ENCODE measurements at regions of chr20 and their contacts with region 1.

Region 1: DNA sequence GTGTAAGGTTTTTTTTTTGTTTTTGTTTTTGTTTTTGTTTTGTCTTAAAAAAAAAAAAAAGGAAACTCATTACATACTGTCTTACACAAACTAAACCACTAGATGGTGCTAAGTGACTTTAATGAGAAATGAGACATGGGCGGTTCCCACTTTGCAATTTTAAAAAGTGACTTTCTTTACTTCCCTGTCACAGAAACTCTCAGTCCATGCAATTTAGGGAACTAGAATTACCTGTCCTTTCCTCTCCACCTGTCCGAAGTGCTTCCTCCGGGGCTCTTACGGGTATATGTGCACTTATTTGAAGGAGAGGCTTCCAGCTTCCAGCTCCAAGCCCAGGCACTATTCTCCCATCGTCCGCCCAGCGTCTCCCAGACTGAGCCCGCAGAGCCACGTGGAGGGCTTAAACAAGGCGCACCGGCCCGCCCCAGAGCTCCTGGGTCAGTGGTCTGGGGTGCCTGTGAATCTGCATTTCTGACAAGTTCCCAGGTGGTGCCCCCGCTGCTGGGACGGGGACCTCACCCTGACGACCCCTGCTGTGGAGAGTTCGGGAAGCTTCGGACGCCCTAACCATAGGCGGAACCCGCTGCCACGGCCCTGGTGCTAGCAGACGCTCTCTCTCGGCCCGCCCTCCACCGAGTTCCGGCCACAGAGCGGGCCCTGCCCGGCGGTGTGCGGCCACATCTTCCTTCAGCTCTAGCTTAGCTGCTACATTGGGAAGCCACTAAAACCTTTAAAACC is 26.1 kb downstream of the BFSP1 start:
- DNase-seq: peak; percentile 78
- ATAC-seq: peak; percentile 88 to 89

Region 2: DNA sequence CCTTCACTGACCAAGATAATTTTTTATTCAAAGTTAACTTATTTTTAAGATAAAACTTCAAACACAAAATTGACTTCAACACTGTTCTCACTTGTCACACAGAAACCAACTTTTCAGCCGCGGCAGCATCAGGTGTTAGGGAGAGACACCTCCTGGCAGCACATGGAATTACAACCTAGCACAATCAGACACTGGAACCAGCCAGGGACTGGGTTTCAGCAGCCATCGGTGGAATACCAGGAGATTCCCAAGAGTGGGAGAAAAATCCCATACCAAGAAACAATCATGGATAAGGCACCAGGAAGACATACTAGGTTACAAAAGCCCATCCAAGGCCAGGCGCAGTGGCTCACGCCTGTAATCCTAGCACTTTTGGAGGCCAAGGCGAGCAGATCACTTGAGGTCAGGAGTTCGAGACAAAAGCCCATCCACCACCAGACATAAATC is 393.5 kb after region 1 on chr20:
- intact Hi-C with region 1: loop called (anchors 5 to 10 kb)
- DNase-seq: peak; percentile 71
- ATAC-seq: peak; percentile 41 to 49

Region 3: GRCh38 chr20:17938871-17939619 is 434.0 kb after region 1 on chr20:
- intact Hi-C with region 1: loop called in 1 of 2 experiments (anchors 2 kb)
- DNase-seq: peak; percentile 73
- ATAC-seq: peak; percentile 58 to 81

Region 4: DNA sequence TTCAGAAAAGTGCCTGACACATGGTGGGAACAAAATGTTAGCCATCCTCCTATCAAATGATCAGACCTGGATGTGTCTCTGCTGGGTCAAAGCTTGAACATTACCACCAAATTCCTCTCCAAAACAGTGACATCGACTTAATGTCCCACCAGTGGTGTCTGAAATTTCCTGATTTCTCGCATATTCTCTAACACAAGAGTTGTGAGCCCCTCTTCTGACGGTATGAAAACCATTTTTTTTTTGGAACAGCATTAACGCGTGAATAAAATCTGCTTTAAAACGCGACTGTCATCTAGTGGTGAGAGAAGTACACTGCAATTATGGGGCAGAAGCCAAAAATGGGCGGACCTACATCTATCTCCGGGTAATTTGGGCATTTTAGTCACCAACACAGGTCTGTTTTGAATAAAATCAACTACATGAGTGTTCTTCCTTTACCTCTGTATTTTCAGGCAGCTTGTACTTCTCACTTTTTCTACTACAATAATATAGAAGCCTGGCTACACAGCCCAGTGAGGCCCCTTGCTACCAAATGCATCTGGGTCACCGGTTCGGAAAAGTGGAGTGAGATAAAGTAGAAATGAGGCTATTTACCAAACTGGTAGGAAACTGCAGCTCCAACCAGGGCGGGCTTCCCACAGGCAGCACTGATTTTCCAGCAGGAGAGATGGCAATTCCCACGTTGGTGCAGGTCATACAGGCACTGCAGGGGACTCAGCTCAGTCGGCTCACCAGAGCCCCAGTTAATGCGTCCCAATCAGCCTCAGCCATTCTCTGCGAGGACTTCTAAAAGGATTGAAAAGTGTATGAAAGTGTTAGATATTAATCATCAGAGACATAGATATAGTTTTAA is 491.1 kb after region 1 on chr20:
- intact Hi-C with region 1: loop called (anchors 2 to 10 kb)
- DNase-seq: no peak
- ATAC-seq: peak; percentile 70 to 71

Region 5: DNA sequence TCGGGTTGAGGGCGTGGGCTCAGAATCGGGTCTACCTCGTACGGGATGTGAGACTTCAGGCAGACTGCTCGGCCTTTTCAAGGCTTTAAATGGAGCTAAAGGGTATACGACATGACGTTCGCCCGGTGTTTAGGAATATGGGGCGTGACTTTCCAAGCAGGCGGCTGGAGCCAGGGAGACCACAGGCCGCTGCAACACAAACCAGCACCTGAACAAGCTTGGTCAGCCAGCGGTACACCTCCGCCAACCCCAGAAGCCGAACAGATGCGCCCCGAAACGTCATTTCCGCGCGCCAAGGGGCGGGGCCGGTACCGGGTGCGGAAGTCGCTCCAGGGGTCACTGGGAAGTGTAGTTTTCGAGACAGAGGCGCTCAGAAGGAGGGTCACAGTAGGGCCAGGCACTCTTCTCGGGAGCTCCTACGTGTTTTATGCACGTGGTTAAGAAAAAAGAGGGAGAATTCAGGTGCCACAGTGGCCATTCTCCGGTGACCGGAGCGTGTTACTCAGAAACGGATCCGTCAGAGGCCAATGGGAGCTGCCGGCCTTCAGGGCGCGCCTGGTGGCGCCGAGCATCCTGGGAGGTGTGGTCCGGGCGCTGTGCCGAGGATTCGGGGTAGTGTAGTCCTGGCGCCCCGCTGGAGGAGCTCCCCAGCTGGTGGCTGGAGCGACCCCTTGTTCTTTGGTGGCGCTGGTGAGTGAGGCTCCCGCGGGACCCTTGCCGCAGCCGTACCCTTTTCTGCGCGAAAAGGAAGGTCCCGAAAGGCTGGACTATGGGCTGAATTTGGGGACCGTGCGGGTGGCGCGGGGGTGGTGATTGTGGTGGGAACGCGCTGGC is 783.1 kb after region 1 on chr20 and contains the start of gene ZNF133:
- intact Hi-C with region 1: loop called in 1 of 2 experiments (anchors 10 kb)
- DNase-seq: peak; percentile 97
- ATAC-seq: peak; percentile 98 to 99
- total RNA-seq, gene ZNF133: 6.7 to 7.4 TPM